K562 (cell line): ENCODE measurements at regions of chr7 and their contacts with region 1.

Region 1: DNA sequence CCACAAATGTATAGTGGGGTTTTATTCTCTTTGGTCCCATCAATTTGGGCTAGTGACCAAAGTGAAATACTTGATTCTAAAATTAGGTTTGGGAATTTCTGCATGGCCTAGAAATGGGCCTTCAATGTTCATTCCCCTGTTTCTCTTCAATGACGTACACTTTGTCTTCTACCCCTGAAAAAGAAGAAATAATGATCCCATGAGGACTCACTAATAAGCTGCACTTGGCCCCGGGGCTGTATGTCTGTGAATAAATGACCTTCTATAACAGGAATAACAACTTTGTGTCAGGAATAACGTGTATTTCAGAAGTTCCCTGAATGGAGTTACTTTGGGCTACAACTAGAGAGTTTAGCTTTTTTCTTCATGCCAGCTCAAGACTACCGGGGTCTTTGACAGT is 20.2 kb downstream of the OR6B1 start:
- DNase-seq: no peak
- ATAC-seq: no peak
- H3K4me3 ChIP-seq: no peak overlapping the region
- H3K27ac ChIP-seq: no peak overlapping the region
- H3K4me1 ChIP-seq: no peaks in the 10 kb centered on the region
- H3K27me3 ChIP-seq: peaks cover 0 to 3% of the 10 kb centered on the region in 2 experiments; a peak in 1 of 5 replicates
- CTCF ChIP-seq: no peak
- EP300 ChIP-seq: no peak
- POLR2A ChIP-seq: no peak
- RAD21 ChIP-seq: no peak

Region 2: DNA sequence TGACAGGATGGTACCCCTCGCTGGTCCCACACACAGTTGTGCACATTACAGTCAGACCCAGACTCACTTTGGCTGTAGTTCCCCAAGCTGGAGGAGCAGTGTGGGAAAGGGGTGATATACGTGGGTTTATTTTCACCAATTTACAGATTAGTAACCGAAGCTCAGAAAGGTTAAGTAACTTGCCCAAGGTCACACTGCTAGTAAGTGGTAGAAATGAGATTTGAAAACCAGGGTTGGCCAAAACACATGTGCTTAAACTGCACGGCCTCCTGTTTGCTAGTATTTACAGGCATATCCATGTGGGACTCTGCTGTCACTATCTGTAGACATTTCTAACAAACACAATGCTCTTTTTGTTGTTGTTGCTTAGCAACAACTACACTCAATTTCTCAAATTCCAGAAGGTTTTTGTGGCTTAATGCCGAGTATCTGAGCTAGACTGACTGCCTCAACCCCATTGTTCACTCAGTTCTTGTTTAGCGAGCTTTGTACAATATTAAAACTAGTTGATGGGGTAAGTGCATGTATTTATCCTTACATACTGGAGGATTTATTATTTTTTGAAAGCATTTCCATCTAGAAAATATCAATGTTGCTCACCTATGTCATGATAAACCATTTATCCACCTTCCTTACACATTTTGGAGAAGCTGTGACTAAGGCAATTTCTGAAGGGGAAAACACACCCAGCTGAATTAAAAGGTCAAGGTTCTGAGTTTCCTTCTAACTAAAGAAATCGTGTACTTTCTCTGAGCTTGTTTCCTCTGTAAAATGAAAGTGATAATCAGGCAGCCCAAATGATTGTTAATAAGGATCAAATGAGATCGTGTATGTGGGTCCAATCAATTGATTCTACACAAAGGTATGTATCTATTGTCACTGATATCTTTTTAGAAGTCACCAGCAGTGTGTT is 740.9 kb before region 1 on chr7:
- CTCF ChIA-PET with region 1: no interaction called
- POLR2A ChIA-PET with region 1: no interaction called
- in situ Hi-C with region 1: no loop called
- intact Hi-C with region 1: no loop called
- DNase-seq: no peak
- ATAC-seq: peak; percentile 11; the same call in 2 of the 3 replicates
- H3K4me3 ChIP-seq: no peak overlapping the region
- H3K27ac ChIP-seq: no peak overlapping the region
- H3K4me1 ChIP-seq: peaks cover 0 to 9% of the 10 kb centered on the region in 2 experiments; a peak in 3 of 5 replicates
- H3K27me3 ChIP-seq: no peaks in the 10 kb centered on the region
- CTCF ChIP-seq: no peak
- EP300 ChIP-seq: no peak
- POLR2A ChIP-seq: no peak
- RAD21 ChIP-seq: no peak

Region 3: GRCh38 chr7:143988976-143989745 is 31.2 kb before region 1 on chr7:
- CTCF ChIA-PET with region 1: no interaction called
- POLR2A ChIA-PET with region 1: no interaction called
- in situ Hi-C with region 1: no loop called
- intact Hi-C with region 1: loop called (anchors 5 kb)
- DNase-seq: peak in 2 of 4 experiments; percentile 31 to 79
- ATAC-seq: peak; percentile 79
- H3K4me3 ChIP-seq: no peak overlapping the region
- H3K27ac ChIP-seq: no peak overlapping the region
- H3K4me1 ChIP-seq: no peaks in the 10 kb centered on the region; a peak in 1 of 5 replicates
- H3K27me3 ChIP-seq: no peaks in the 10 kb centered on the region
- CTCF ChIP-seq: no peak
- EP300 ChIP-seq: peak; percentile 58; the same call in 1 of the 2 replicates
- POLR2A ChIP-seq: no peak
- RAD21 ChIP-seq: no peak